ENCODE measurements at regions of chr14 and their contacts with region 1.

Region 1: DNA sequence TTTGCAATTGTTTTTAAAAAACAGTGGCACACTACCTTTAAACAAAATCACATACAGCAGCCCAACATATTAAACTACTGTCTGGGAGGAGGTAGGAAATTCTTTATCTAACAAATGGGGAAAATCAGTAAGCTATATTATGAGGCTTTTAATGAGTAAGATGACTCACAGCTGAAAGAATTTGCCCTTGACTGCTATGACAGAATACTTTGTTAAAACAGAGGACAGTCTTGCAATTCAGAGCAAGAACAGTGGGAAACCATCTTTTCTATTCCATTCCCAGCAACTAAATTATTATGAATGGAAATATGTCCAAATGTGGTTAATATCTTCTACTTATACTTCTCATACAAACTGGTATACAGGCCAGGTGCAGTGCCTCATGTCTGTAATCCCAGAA is 49.2 kb upstream of the SGPP1 start:
- DNase-seq: peak; percentile 69
- ATAC-seq: peak; percentile 86
- H3K4me3 ChIP-seq: no peak overlapping the region
- H3K27ac ChIP-seq: no peak overlapping the region
- H3K4me1 ChIP-seq: peaks cover 3% of the 10 kb centered on the region; the same call in 1 of the 2 replicates
- H3K27me3 ChIP-seq: no peaks in the 10 kb centered on the region
- CTCF ChIP-seq: no peak
- POLR2A ChIP-seq: no peak
- RAD21 ChIP-seq: no peak

Region 2: GRCh38 chr14:61973868-61974321 is 1803.1 kb before region 1 on chr14:
- CTCF ChIA-PET with region 1: no interaction called
- POLR2A ChIA-PET with region 1: interaction called, 11 read pairs
- dilution Hi-C with region 1: no loop called
- in situ Hi-C with region 1: no loop called
- intact Hi-C with region 1: no loop called
- DNase-seq: peak; percentile 87
- ATAC-seq: peak; percentile 92
- H3K4me3 ChIP-seq: no peak overlapping the region
- H3K27ac ChIP-seq: peak overlapping the region; percentile 41
- H3K4me1 ChIP-seq: peaks cover 8% of the 10 kb centered on the region
- H3K27me3 ChIP-seq: no peaks in the 10 kb centered on the region
- CTCF ChIP-seq: no peak
- POLR2A ChIP-seq: no peak
- RAD21 ChIP-seq: no peak

Region 3: DNA sequence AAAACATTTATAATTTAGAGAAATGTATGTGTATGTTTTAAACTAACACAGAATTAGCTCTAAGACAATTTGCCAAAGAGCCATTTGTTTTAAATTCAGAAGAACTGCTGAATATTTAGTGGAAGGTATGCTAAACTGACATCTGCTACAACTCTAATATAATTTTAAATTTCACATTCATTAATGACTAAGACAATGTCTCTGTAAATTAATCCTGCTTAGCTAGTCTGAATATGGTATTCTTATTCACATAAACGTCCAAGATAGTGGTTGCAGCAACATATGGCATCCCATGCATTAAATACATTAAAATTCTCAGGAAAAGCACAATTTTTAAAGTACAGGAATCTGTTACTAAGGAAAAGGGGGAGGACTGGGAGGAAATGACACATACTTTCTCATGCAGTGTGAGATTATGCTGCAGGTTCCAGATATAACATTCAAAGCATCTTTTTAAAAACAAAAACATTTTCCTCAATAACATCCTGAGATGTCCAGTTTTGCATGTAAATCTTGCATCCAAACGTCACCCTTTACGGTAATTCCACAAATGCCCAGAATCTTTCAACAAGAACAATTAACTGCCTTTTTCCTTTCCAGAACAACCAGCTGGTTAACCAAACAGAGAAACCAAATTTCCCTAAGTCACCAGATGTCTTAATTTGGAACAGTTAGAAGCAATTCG is 162.2 kb before region 1 on chr14:
- CTCF ChIA-PET with region 1: no interaction called
- POLR2A ChIA-PET with region 1: no interaction called
- dilution Hi-C with region 1: no loop called
- in situ Hi-C with region 1: no loop called
- intact Hi-C with region 1: no loop called
- DNase-seq: peak; percentile 67
- ATAC-seq: peak; percentile 72
- H3K4me3 ChIP-seq: no peak overlapping the region
- H3K27ac ChIP-seq: no peak overlapping the region
- H3K4me1 ChIP-seq: peaks cover 6% of the 10 kb centered on the region
- H3K27me3 ChIP-seq: no peaks in the 10 kb centered on the region
- CTCF ChIP-seq: no peak
- POLR2A ChIP-seq: no peak
- RAD21 ChIP-seq: no peak